ENCODE measurements at regions of chr12 and their contacts with region 1.

Region 1: DNA sequence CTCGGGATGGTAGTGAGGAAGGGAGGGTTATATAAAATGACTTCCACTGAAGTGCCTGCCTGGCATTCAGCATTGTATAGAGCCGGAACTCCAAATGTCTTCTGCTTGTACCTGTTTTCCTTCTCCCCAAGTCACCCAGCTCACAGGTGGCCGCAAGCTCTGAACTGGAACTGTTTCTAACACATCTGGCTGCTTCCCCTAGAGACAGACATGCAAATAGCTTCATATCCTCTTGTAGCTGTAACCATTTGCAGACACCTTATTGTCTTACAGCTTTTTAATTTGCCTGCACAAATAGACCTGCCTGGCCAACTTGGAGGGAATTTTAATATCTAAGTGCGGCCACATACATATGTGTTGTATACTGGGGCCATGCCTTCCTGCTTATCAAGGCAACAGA is 126.0 kb downstream of the CHST11 start:
- DNase-seq: peak; percentile 96
- H3K4me3 ChIP-seq: peak overlapping the region; percentile 59
- H3K27ac ChIP-seq: peak overlapping the region; percentile 100
- H3K4me1 ChIP-seq: peaks cover 95% of the 10 kb centered on the region
- CTCF ChIP-seq: no peak

Region 2: GRCh38 chr12:104207416-104208210 is 375.1 kb before region 1 on chr12:
- CTCF ChIA-PET with region 1: no interaction called
- POLR2A ChIA-PET with region 1: no interaction called
- intact Hi-C with region 1: no loop called
- DNase-seq: no peak
- H3K4me3 ChIP-seq: no peak overlapping the region
- H3K27ac ChIP-seq: no peak overlapping the region
- H3K4me1 ChIP-seq: no peaks in the 10 kb centered on the region
- CTCF ChIP-seq: no peak

Region 3: DNA sequence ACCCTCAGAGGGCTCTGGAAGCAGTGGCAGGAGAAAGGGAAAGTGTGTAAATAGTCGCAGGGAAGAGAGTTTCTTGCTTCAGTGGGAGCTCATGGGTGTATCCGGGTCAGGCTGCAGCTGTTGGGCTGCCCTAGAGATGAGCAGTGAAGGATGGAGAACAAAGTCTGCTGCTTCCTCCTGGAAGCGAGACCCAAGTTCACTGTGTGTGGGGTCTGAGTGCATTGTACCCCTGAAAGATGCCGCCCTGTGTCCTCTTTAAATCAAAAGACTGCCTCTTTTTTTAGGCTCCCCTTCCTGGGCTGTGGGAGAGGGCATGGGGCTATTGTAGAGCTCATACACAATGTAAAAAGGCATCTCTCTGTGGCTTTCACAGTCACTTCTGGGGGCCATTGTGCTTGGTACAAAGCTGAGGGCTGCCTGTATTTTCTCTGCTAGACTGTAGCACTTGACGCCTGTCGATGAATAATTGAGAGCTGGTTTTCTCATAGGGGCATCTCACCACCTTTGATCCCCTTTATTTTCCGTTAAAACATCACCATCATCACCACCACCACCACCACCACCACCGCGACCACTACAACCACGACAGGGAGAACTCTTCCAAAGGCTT is 109.3 kb before region 1 on chr12:
- CTCF ChIA-PET with region 1: no interaction called
- POLR2A ChIA-PET with region 1: interaction called, 10 read pairs
- intact Hi-C with region 1: loop called (anchors 1 kb)
- DNase-seq: peak; percentile 80
- H3K4me3 ChIP-seq: peak overlapping the region; percentile 58
- H3K27ac ChIP-seq: peak overlapping the region; percentile 89
- H3K4me1 ChIP-seq: peaks cover 92% of the 10 kb centered on the region
- CTCF ChIP-seq: no peak

Region 4: DNA sequence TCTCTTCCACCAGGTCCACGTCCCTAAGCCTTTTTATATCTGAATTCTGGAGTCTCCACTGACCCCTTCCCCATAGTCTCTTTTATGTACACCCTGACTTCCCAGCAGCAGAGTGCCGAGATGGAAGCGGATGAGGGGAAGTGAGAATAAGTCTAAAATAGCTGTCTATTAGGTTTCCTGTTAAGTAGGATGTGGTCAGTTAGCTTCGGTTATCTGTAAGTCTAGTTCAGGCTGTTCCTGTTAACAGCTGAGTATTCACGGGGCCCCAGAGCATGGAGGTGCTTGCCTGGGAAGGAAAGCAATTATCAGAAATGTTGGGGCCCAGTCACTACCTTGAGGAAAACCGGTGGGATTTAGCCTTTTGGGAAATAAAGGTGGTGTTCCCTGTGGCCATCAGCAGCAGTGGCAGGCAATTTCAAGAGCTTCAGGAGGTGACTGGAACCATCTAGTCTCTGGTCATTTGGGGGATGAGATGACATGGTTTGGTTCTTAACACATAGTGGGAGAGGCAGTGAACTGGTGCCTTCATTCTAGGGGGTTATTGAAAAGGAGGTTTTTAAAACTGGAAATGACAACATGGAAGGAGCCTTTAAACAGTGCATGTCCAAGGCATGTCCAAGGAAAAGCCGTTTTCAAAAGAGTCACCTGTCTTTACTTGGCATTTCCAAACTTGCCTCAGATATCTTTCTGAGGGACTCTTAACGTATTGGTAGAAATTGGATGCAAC is 104.2 kb before region 1 on chr12:
- CTCF ChIA-PET with region 1: no interaction called
- POLR2A ChIA-PET with region 1: interaction called, 10 read pairs
- intact Hi-C with region 1: loop called (anchors 1 kb)
- DNase-seq: peak; percentile 90
- H3K4me3 ChIP-seq: peak overlapping the region; percentile 61
- H3K27ac ChIP-seq: peak overlapping the region; percentile 87
- H3K4me1 ChIP-seq: peaks cover 88% of the 10 kb centered on the region
- CTCF ChIP-seq: no peak

Region 5: DNA sequence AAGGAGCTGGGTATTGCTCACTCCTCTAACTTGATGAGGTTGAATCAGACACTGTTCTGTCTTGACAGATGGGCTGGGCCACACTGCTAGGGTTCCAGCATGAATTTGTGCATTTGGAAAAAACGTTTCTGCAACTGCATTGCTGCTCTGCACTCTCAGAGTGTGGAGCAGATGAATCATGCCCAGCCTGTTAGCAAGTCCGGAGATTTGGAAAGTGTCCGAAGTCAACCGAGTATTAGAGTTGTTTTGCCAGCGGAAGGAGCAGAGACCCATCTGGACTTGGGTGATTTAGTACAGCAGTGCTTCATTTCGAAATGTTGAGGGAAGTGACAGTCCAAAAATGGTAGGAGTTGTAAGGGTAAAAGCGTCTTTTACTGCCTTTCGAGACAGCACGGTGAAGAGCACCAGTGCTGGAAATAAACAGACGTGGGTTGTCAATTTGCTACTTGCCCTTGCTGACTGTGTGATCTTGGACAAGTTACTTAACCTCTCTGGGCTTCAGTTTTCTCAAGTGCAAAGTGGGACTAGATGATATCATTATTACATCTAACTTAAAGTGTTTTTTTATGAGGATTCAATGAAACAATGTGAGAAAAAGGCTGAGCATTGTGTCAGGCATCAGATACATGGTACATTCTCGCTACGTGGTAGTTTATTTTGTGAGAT is 13.5 kb after region 1 on chr12:
- CTCF ChIA-PET with region 1: no interaction called
- POLR2A ChIA-PET with region 1: interaction called, 17 read pairs
- intact Hi-C with region 1: no loop called
- DNase-seq: no peak
- H3K4me3 ChIP-seq: no peak overlapping the region
- H3K27ac ChIP-seq: no peak overlapping the region
- H3K4me1 ChIP-seq: peaks cover 60% of the 10 kb centered on the region
- CTCF ChIP-seq: no peak

Region 6: GRCh38 chr12:104604070-104604994 is 21.6 kb after region 1 on chr12:
- CTCF ChIA-PET with region 1: interaction called, 8 read pairs
- POLR2A ChIA-PET with region 1: interaction called, 22 read pairs
- intact Hi-C with region 1: loop called (anchors 1 kb)
- DNase-seq: peak; percentile 88
- H3K4me3 ChIP-seq: peak overlapping the region; percentile 38
- H3K27ac ChIP-seq: peak overlapping the region; percentile 84
- H3K4me1 ChIP-seq: peaks cover 49% of the 10 kb centered on the region
- CTCF ChIP-seq: no peak; the same call in 1 of the 2 replicates